ENCODE measurements at regions of chr2 and their contacts with region 1.

Region 1: GRCh38 chr2:85106507-85107215 is 26.5 kb upstream of the TCF7L1 start:
- DNase-seq: no peak
- H3K4me3 ChIP-seq: no peak overlapping the region
- H3K27me3 ChIP-seq: no peaks in the 10 kb centered on the region
- CTCF ChIP-seq: no peak

Region 2: DNA sequence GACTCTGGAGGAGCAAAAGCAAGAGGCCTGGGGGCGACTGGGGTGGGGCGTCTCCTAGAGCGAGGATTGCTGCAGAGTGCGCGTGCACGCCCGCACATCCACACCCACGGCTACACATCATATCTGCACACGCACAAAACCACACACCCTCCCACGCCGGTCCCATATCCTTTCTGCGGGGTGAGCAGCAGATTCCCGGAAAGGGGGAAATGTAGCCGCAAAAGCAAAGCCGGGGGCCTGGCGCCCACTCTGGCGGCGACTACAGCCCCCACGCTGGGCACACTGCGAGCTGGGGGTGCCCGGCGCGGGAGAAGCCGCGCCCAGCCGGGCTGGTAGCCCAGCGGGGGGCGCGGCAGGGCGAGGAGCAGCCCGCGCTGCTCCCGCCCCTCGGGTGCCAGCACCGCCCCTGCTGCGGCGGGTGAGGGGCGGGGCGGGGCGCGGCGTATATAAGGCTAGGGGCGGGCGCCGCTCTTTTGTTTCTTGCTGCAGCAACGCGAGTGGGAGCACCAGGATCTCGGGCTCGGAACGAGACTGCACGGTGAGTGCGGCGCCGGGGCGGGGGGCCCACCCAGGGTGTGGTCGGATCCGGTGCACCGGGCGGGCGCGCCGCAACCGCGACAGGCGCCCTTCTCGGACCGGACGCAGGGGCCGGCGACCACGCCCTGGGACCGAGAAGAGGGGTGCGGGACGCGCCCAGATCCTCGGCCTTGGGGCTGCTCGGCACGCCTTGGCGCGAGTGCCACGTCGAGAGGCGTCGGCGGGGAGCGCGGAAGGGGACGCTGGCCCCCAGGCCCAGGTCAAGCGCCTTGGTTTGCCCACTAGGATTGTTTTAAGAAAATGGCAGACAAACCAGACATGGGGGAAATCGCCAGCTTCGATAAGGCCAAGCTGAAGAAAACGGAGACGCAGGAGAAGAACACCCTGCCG is 201.2 kb before region 1 on chr2 and contains the start of gene TMSB10:
- CTCF ChIA-PET with region 1: no interaction called
- POLR2A ChIA-PET with region 1: interaction called, 10 read pairs
- DNase-seq: no peak
- H3K4me3 ChIP-seq: peak within 1 kb of the TSS; percentile 80
- H3K27me3 ChIP-seq: no peaks in the 10 kb centered on the region
- CTCF ChIP-seq: no peak
- polyA plus RNA-seq, gene TMSB10: 2,234 and 3,073 TPM in 2 replicates

Region 3: DNA sequence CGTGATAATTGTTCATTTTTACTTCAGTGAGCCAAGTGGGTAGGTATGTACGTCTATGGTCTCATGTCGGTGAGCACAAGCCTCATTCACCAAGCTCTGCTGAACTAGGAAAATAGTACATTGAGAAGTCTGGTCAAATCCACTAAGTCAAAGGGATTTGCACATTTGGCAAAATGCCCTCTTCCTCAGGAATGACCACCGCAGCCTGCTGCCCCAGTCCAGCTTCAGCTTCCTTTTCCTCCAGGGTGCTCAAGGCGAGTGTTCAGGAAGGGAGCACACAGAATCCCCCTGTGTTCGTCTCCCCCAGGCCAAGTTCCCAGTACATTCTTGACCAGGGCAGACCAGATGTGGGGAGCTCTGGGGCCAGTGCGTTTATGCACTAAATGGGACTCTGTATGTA is 49.5 kb after region 1 on chr2:
- CTCF ChIA-PET with region 1: no interaction called
- POLR2A ChIA-PET with region 1: no interaction called
- DNase-seq: no peak
- H3K4me3 ChIP-seq: no peak overlapping the region
- H3K27me3 ChIP-seq: no peaks in the 10 kb centered on the region
- CTCF ChIP-seq: no peak

Measured in BJ (cell line).